K562 (cell line): ENCODE measurements at regions of chr10 and their contacts with region 1.

Region 1: GRCh38 chr10:49172061-49172776 is 16.0 kb downstream of the TMEM273 start:
- DNase-seq: no peak
- ATAC-seq: no peak
- H3K4me3 ChIP-seq: no peak overlapping the region
- H3K27ac ChIP-seq: peak overlapping the region; percentile 54
- H3K4me1 ChIP-seq: peaks cover 82 to 96% of the 10 kb centered on the region in 2 experiments
- H3K27me3 ChIP-seq: no peaks in the 10 kb centered on the region
- CTCF ChIP-seq: no peak
- EP300 ChIP-seq: no peak
- POLR2A ChIP-seq: no peak
- RAD21 ChIP-seq: no peak

Region 2: GRCh38 chr10:48782386-48782785 is 389.8 kb before region 1 on chr10:
- CTCF ChIA-PET with region 1: no interaction called
- POLR2A ChIA-PET with region 1: no interaction called
- in situ Hi-C with region 1: no loop called
- intact Hi-C with region 1: no loop called
- DNase-seq: no peak
- ATAC-seq: no peak
- H3K4me3 ChIP-seq: no peak overlapping the region
- H3K27ac ChIP-seq: no peak overlapping the region
- H3K4me1 ChIP-seq: no peaks in the 10 kb centered on the region
- H3K27me3 ChIP-seq: peaks cover 0 to 16% of the 10 kb centered on the region in 2 experiments; a peak in 3 of 5 replicates
- CTCF ChIP-seq: no peak
- EP300 ChIP-seq: no peak
- POLR2A ChIP-seq: no peak
- RAD21 ChIP-seq: no peak

Region 3: GRCh38 chr10:49182776-49183175 is 10.6 kb after region 1 on chr10:
- CTCF ChIA-PET with region 1: no interaction called
- POLR2A ChIA-PET with region 1: interaction called, 12 read pairs
- in situ Hi-C with region 1: no loop called
- intact Hi-C with region 1: loop called (anchors 2 kb)
- DNase-seq: peak in 1 of 4 experiments; percentile 59
- ATAC-seq: peak; percentile 24
- H3K4me3 ChIP-seq: no peak overlapping the region
- H3K27ac ChIP-seq: peak overlapping the region; percentile 88
- H3K4me1 ChIP-seq: peaks cover 50 to 84% of the 10 kb centered on the region in 2 experiments
- H3K27me3 ChIP-seq: no peaks in the 10 kb centered on the region
- CTCF ChIP-seq: no peak
- EP300 ChIP-seq: no peak
- POLR2A ChIP-seq: no peak
- RAD21 ChIP-seq: no peak

Region 4: DNA sequence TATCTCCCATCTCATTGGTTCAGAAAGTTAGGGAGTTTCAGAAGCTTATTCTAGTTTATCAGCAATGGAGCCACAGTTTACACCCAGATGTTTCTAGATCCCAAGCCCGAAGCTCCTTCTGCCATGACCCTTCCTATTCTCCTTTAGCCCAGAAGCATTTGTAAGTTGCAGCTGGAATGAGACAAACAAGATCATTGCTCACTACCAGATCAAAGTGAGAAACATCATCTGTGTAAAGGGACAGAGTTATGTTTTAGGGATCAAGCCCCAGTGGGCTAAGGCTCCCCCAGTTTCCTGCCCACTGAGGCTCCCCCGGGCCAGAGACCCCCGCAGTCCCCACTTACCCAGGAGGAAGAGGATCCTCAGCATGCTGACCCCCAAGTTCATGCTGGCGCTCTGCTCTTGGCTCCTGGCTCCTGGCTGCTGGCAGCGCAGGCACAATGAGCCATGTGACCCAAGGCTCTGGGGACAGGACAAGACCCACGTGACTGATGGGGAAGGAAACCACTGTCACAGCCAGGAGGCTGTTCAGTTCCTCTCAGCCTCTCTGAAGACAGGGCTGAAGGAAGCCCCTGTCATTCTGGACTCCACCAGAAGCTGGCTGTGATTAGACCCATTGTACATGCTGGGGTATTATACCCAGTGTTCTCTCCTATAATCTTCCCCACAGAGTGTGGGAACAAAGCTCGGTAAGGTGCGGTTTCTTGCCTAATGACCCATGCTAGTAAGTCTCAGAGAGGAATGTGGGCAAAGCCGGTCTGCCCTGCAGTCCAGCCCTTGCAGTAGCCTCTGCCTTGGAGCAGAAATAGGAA is 15.9 kb after region 1 on chr10 and contains the start of gene TMEM273:
- CTCF ChIA-PET with region 1: no interaction called
- POLR2A ChIA-PET with region 1: interaction called, 11 read pairs
- in situ Hi-C with region 1: no loop called
- intact Hi-C with region 1: loop called (anchors 2 kb)
- DNase-seq: peak; percentile 53 to 86 (median 63)
- ATAC-seq: peak; percentile 50
- H3K4me3 ChIP-seq: peak within 1 kb of the TSS; percentile 32
- H3K27ac ChIP-seq: peak within 1 kb of the TSS; percentile 57
- H3K4me1 ChIP-seq: peaks cover 42 to 45% of the 10 kb centered on the region in 2 experiments
- H3K27me3 ChIP-seq: no peaks in the 10 kb centered on the region
- CTCF ChIP-seq: no peak
- EP300 ChIP-seq: no peak
- POLR2A ChIP-seq: peak; percentile 71
- RAD21 ChIP-seq: no peak
- polyA plus RNA-seq, gene TMEM273: 97.3 to 102 TPM

Region 5: DNA sequence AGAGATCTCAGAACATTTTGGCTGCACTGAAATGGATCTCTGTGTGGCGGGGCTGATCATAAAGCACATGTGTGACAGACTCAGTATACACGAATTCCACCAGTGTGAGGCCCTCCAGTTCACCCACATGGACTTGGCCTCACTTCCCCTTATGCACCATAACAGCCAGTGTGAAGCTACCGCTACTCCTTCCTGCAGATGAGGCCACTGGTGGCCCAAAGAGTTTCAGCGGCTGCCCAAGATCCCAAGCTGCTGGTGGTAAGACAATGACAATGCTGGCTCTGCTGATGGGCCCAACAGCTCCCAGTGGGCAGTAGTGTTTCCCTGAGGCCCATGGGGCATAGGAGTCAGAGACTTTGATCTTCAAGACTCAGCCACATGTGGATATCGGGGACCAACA is 105.8 kb after region 1 on chr10:
- CTCF ChIA-PET with region 1: no interaction called
- POLR2A ChIA-PET with region 1: interaction called, 7 read pairs
- in situ Hi-C with region 1: no loop called
- intact Hi-C with region 1: loop called (anchors 5 kb)
- DNase-seq: no peak
- ATAC-seq: peak; percentile 51
- H3K4me3 ChIP-seq: no peak overlapping the region
- H3K27ac ChIP-seq: no peak overlapping the region
- H3K4me1 ChIP-seq: peaks cover 15 to 19% of the 10 kb centered on the region in 2 experiments
- H3K27me3 ChIP-seq: no peaks in the 10 kb centered on the region
- CTCF ChIP-seq: 0 out of 6 replicates have a peak, but pooled peaks of 1 of the 3 experiments have one; percentile 3
- EP300 ChIP-seq: no peak
- POLR2A ChIP-seq: no peak
- RAD21 ChIP-seq: no peak

Region 6: DNA sequence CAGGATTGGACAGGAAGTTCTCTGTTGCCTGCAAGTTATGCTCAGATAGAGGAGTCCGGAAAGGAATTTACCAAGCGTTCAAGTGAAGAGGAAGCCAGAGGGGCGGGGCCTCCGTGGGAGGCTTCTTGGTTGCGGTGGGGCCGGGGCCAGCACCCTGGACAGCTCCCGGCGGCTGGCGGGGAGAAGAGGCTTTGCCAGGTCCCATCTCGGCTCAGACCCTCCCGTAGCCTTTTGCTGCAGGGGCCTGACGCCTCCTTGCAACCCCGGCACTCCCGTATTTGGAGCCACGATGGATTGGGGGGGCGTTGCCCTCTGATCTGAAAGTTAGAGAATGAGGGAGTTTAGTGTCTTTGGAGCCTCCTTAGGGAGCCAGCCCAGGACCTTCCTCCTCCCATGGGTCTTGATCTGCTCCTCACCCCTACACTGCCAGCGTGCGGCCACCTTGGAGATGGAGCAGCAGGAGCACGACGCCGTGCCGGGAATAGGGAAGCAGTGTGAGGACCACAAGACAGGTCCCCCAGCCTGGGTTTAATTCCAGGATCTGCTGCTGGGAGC is 434.8 kb after region 1 on chr10:
- CTCF ChIA-PET with region 1: no interaction called
- POLR2A ChIA-PET with region 1: no interaction called
- in situ Hi-C with region 1: no loop called
- intact Hi-C with region 1: no loop called
- DNase-seq: peak; percentile 82 to 95 (median 91)
- ATAC-seq: peak; percentile 99
- H3K4me3 ChIP-seq: no peak overlapping the region
- H3K27ac ChIP-seq: no peak overlapping the region
- H3K4me1 ChIP-seq: peaks cover 0 to 17% of the 10 kb centered on the region in 2 experiments; a peak in 2 of 5 replicates
- H3K27me3 ChIP-seq: peaks cover 0 to 22% of the 10 kb centered on the region in 2 experiments; a peak in 2 of 5 replicates
- CTCF ChIP-seq: no peak
- EP300 ChIP-seq: no peak
- POLR2A ChIP-seq: no peak
- RAD21 ChIP-seq: no peak